ENCODE measurements at regions of chr16 and their contacts with region 1.

Region 1: DNA sequence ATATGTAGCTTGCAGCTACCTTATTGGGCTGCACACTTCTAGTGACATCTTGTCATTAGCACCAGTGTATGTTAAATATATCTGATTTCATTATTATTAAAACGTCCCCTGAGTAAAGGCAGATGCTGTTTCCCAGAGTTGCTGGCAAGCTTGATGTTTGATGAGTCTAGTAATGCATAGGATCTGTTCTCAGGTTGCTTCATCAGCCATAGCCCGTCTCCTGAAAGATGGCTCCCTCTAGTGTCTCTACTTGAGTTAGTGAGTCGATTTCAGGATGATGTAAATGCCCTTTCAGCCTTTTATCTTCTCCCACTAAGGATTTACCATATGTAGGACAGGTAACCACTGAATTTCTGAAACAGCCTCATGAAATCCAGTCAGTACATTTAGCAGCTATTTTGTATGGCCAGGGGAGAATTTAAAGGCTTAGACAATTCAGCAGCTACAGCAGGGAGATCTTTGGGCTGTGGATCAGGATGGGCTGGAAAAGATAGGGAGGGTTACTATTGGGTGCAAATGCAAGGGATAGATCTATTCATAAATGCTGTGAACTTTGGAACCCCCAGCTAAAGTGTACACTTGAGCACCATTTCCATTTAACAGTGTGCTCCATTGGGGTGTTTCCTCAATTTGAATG is 376.3 kb downstream of the CNTNAP4 start:
- DNase-seq: peak; percentile 10
- H3K4me3 Mint-ChIP-seq: no peak overlapping the region
- H3K27ac Mint-ChIP-seq: no peak overlapping the region
- H3K4me1 Mint-ChIP-seq: no peaks in the 10 kb centered on the region
- H3K27me3 Mint-ChIP-seq: no peaks in the 10 kb centered on the region

Region 2: DNA sequence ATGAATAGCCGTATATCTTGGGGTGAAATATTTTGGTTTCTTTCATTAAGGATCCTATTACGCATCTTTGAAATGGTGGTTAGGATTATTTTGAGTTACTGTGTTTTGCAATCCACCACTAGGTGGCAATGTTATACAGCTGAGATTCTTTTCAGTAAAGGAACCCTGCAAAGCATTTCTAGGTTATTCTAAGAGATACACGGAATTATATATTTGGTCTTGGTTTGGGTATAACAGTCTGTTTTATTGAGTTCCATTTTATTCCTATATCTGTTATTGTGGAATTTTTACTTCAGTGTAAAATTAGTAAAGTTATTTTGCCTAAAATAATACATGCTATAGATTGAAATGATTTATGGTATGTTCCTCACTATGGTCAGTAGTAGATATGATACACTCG is 864.3 kb before region 1 on chr16:
- CTCF ChIA-PET with region 1: no interaction called
- intact Hi-C with region 1: loop called (anchors 1 kb)
- DNase-seq: no peak
- H3K4me3 Mint-ChIP-seq: no peak overlapping the region
- H3K27ac Mint-ChIP-seq: no peak overlapping the region
- H3K4me1 Mint-ChIP-seq: no peaks in the 10 kb centered on the region
- H3K27me3 Mint-ChIP-seq: peaks cover 3% of the 10 kb centered on the region

Region 3: DNA sequence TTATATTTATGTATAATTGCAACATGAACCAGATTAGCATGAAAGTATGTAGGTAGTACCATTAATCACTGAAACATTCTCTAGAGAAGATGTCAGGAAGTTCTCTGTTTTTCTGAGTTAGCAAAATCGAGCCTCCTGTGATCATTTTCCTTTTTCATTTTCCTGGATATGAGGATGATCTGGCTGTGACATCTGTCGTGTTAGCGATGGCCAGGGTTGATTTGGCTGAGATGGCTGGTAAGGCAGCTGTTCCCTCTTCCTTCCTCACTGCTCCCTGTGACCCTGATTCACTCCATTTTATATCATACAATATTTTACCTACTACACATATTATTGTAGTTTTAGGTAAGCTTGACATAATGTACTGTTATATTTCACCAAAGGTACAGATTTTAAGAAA is 366.0 kb before region 1 on chr16:
- CTCF ChIA-PET with region 1: no interaction called
- intact Hi-C with region 1: loop called (anchors 10 kb)
- DNase-seq: no peak
- H3K4me3 Mint-ChIP-seq: no peak overlapping the region
- H3K27ac Mint-ChIP-seq: no peak overlapping the region
- H3K4me1 Mint-ChIP-seq: no peaks in the 10 kb centered on the region
- H3K27me3 Mint-ChIP-seq: no peaks in the 10 kb centered on the region

Region 4: DNA sequence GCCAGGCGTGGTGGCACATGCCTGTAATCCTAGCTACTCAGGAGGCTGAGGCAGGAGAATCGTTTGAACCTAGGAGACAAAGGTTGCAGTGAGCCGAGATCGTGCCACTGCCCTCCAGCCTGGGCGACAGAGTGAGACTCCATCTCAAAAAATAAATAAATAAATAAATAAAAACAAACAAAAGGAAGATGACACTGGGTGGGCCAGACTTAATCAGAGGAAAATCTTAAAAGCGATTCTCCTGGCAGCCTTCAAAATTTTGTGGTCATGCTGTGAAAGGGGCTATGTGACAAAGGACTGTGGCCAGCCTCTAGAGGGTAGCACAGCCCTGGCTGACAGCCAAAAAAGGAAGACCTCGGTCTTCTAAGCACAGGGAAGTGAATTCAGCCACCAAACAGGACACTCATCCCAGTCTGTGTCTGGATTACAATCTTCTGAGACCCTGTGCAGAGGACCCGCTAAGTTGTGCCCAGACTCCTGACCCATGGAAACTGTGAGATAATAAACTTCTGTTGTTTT is 14.8 kb after region 1 on chr16:
- CTCF ChIA-PET with region 1: no interaction called
- intact Hi-C with region 1: no loop called
- DNase-seq: no peak
- H3K4me3 Mint-ChIP-seq: no peak overlapping the region
- H3K27ac Mint-ChIP-seq: no peak overlapping the region
- H3K4me1 Mint-ChIP-seq: no peaks in the 10 kb centered on the region
- H3K27me3 Mint-ChIP-seq: no peaks in the 10 kb centered on the region

Region 5: DNA sequence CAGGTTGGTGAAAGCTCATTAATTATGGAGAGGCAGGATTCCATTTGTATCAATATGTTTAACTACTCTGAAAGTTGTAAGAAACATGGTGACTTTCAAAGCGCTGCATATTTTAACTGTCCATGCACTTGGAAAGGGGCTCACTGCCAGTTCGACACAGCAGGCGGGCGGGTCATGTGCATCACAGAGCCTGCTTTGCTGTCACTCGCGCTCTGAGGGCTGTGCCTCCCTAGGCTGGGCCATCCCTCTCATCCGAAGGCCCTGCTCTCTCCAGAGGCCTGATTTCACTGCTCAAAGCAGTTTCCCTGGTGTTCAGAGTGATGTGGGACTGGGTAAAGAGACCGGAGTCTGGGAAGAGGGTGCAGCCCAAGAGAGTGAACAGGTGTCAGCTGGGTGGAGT is 115.4 kb after region 1 on chr16:
- CTCF ChIA-PET with region 1: no interaction called
- intact Hi-C with region 1: no loop called
- DNase-seq: no peak
- H3K4me3 Mint-ChIP-seq: no peak overlapping the region
- H3K27ac Mint-ChIP-seq: no peak overlapping the region
- H3K4me1 Mint-ChIP-seq: no peaks in the 10 kb centered on the region
- H3K27me3 Mint-ChIP-seq: no peaks in the 10 kb centered on the region